GM12878 (cell line): ENCODE measurements at regions of chr15 and their contacts with region 1.

Region 1: DNA sequence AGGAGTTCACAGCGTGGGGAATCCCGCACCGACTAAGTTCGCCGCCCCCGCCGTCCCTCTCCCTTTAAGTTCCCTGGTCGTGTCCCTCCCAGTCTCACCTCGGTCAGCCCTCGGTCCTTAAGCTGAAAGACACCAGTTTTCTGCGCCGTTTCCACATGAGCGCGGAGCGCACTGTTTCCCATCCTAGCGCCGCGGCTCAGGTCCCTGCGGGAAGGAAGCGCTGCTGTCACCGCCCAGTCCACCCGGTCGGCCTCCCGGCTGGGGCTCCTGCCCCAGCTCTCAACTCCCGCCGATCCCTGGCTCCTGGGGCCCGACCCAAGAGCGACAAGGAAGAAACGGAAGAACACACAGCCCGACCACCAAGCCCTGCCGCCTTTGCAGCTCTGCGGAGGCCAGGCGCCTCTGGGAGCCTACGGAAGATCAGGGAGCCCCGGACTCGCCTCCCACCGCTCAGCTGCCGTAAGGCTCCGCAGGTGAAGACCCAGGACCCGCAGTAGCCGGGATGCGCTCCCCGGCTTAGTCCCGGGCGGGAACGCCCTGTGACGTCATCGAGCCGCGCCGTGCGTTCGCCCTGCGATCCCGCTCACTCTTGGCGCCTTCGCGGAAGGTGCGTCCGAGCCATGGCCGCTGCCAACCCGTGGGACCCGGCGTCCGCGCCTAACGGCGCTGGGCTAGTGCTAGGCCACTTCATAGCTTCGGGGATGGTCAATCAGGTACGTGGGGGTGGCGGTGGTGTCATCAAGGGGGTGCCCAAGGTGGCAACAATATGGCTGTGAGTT is at the starts of genes HAUS2 and LRRC57:
- DNase-seq: peak; percentile 55
- ATAC-seq: peak; percentile 90
- H3K4me3 ChIP-seq: peak within 1 kb of the TSS; percentile 76
- H3K27ac ChIP-seq: peak within 1 kb of the TSS; percentile 72
- H3K4me1 ChIP-seq: no peaks in the 10 kb centered on the region; the same call in 1 of the 2 replicates
- H3K27me3 ChIP-seq: no peaks in the 10 kb centered on the region
- CTCF ChIP-seq: no peak
- EP300 ChIP-seq: no peak
- POLR2A ChIP-seq: peak; percentile 97
- RAD21 ChIP-seq: no peak
- polyA plus RNA-seq, gene HAUS2: 30.8 to 37.0 TPM
- polyA plus RNA-seq, gene LRRC57: 5.2 to 5.8 TPM

Region 2: DNA sequence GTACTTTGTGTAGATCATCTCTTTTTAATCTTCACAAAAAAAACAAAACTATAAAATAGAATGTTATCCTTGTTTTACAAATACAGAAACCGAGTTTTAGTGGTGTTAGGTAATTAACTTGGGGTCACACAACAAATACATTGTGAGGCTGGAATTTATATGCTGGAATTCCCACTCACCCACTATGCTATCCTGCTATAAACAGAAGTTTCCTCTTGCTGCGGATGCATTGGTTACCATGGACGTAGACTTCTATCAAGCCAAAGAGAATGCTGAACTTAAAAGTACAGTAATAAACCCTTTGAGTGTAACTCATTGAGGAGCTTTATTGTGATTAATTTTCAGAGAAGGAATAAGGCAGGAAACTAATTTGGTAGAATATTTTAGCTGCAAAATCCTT is 43.8 kb before region 1 on chr15:
- CTCF ChIA-PET with region 1: interaction called, 3 read pairs
- POLR2A ChIA-PET with region 1: interaction called, 9 read pairs
- RAD21 ChIA-PET with region 1: interaction called, 6 read pairs
- SMC1A ChIA-PET with region 1: interaction called, 17 read pairs
- in situ Hi-C with region 1: no loop called
- intact Hi-C with region 1: no loop called
- DNase-seq: no peak
- ATAC-seq: peak; percentile 23
- H3K4me3 ChIP-seq: peak overlapping the region; percentile 44; the same call in 1 of the 2 replicates
- H3K27ac ChIP-seq: peak overlapping the region; percentile 81
- H3K4me1 ChIP-seq: peaks cover 50% of the 10 kb centered on the region
- H3K27me3 ChIP-seq: no peaks in the 10 kb centered on the region
- CTCF ChIP-seq: no peak
- EP300 ChIP-seq: no peak
- POLR2A ChIP-seq: no peak
- RAD21 ChIP-seq: no peak

Region 3: DNA sequence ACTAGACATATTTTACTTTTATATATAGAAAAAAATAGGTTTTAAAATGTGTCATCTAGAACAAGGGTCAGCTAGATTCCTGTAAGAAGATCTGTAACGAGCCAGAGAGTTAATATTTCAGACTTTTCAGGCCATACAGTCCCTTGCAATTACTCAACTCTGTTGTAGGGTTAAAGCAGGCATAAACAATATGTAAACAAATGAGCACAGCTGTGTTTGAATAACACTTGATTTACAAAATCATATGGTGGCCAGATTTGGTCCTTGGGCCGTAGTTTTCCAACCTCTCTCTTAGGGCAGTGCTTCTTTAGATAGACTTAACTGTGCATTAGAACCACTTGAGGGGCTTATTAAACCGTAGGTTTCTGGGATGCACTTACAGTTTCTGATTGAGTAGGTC is 19.5 kb before region 1 on chr15:
- CTCF ChIA-PET with region 1: no interaction called
- POLR2A ChIA-PET with region 1: interaction called, 13 read pairs
- RAD21 ChIA-PET with region 1: interaction called, 3 read pairs
- SMC1A ChIA-PET with region 1: interaction called, 45 read pairs
- in situ Hi-C with region 1: no loop called
- intact Hi-C with region 1: no loop called
- DNase-seq: no peak
- ATAC-seq: no peak
- H3K4me3 ChIP-seq: no peak overlapping the region
- H3K27ac ChIP-seq: no peak overlapping the region
- H3K4me1 ChIP-seq: no peaks in the 10 kb centered on the region
- H3K27me3 ChIP-seq: no peaks in the 10 kb centered on the region
- CTCF ChIP-seq: no peak
- EP300 ChIP-seq: no peak
- POLR2A ChIP-seq: no peak
- RAD21 ChIP-seq: no peak

Region 4: DNA sequence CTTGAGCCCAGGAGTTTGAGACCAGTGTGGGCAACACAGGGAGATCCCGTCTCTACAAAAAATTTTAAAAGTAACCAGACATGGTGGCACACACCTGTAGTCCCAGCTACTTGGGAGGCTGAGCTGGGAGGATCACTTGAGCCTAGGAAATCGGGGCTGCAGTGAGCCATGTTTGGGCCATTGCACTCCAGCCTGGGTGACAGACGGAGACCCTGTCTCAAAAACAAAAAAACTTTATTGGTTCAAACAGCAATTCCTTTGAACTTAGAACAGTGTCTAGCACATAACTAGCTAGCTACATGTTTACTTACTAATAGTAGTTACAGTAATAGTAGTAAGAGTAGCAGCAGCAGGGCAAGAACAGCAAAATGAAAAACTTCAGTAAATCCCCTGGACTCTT is 10.3 kb after region 1 on chr15:
- CTCF ChIA-PET with region 1: interaction called, 4 read pairs
- POLR2A ChIA-PET with region 1: interaction called, 7 read pairs
- RAD21 ChIA-PET with region 1: no interaction called
- SMC1A ChIA-PET with region 1: interaction called, 16 read pairs
- in situ Hi-C with region 1: no loop called
- intact Hi-C with region 1: no loop called
- DNase-seq: no peak
- ATAC-seq: no peak
- H3K4me3 ChIP-seq: no peak overlapping the region
- H3K27ac ChIP-seq: no peak overlapping the region
- H3K4me1 ChIP-seq: no peaks in the 10 kb centered on the region
- H3K27me3 ChIP-seq: no peaks in the 10 kb centered on the region
- CTCF ChIP-seq: no peak
- EP300 ChIP-seq: no peak
- POLR2A ChIP-seq: no peak
- RAD21 ChIP-seq: no peak

Region 5: DNA sequence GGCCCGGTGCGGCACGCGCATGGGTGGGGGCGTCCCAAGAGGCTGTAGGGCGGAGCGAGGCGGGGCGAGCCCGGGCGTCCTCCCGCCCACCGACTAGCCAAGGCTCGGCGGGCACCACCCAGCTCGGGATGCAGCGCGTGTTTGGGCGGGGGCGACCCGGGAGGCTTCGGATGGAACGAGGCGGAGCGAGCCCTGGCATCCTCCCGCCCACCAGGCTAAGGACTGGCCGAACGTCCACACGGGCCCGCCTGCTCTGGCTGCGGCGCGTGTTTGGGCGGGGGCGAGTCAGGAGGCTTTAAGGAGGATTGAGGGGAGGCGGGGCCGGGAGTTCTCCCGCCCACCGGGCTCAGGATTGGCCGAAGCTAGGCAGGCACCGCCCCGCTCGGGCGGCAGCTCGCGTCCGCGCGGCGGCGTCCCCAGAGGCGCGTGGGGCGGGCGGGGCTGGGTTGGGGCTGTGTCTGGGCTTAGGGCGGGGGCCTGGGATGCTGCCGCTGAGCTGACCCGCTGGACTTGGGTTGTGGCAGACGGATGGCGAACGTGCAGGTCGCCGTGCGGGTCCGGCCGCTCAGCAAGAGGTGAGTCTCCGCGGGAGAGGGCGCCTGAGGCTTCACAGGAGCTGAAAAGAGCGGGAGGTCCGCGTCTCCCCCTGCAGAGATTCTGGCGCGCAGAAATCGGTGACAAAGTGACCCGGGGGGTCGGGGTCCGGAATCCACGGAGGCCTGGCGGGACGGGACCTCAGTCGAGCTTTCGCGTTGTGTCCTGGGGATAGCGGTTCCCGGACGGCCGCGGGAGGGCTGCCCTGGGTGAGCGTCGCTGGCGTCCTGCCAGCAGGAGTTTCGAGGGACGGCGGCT is 27.0 kb after region 1 on chr15 and contains the start of gene STARD9:
- CTCF ChIA-PET with region 1: no interaction called
- POLR2A ChIA-PET with region 1: interaction called, 13 read pairs
- RAD21 ChIA-PET with region 1: interaction called, 9 read pairs
- SMC1A ChIA-PET with region 1: interaction called, 8 read pairs
- in situ Hi-C with region 1: no loop called
- intact Hi-C with region 1: no loop called
- DNase-seq: peak; percentile 87
- ATAC-seq: peak; percentile 94
- H3K4me3 ChIP-seq: peak within 1 kb of the TSS; percentile 89
- H3K27ac ChIP-seq: peak within 1 kb of the TSS; percentile 57; the same call in 1 of the 2 replicates
- H3K4me1 ChIP-seq: peaks cover 24% of the 10 kb centered on the region
- H3K27me3 ChIP-seq: no peaks in the 10 kb centered on the region
- CTCF ChIP-seq: no peak; a peak in 1 of 6 replicates
- EP300 ChIP-seq: no peak
- POLR2A ChIP-seq: peak; percentile 97
- RAD21 ChIP-seq: no peak
- polyA plus RNA-seq, gene STARD9: 0.58 to 1.1 TPM

Region 6: GRCh38 chr15:42632105-42632675 is 83.7 kb after region 1 on chr15:
- CTCF ChIA-PET with region 1: no interaction called
- POLR2A ChIA-PET with region 1: no interaction called
- RAD21 ChIA-PET with region 1: no interaction called
- SMC1A ChIA-PET with region 1: no interaction called
- in situ Hi-C with region 1: no loop called
- intact Hi-C with region 1: no loop called
- DNase-seq: no peak
- ATAC-seq: peak; percentile 47
- H3K4me3 ChIP-seq: peak overlapping the region; percentile 14; the same call in 1 of the 2 replicates
- H3K27ac ChIP-seq: peak overlapping the region; percentile 31; the same call in 1 of the 2 replicates
- H3K4me1 ChIP-seq: peaks cover 7% of the 10 kb centered on the region
- H3K27me3 ChIP-seq: no peaks in the 10 kb centered on the region
- CTCF ChIP-seq: no peak
- EP300 ChIP-seq: no peak
- POLR2A ChIP-seq: no peak
- RAD21 ChIP-seq: no peak